Heart right ventricle (tissue), 16 donors: ENCODE measurements at regions of chr10 and their contacts with region 1.

Region 1: GRCh38 chr10:132307823-132308587 is at the start of gene STK32C:
- DNase-seq: peak; percentile 90 to 94
- ATAC-seq: peak; percentile 95 to 98 (median 98)
- H3K4me3 ChIP-seq: peak within 1 kb of the TSS; percentile 61 to 98 (median 88)
- H3K27ac ChIP-seq: peak within 1 kb of the TSS in 9 of 10 donors; percentile 60 to 80 (median 75)
- H3K4me1 ChIP-seq: peaks cover 4 to 19% (median 17%) of the 10 kb centered on the region in 9 donors
- H3K27me3 ChIP-seq: peaks cover 0 to 18% (median 0%) of the 10 kb centered on the region in 7 donors
- CTCF ChIP-seq: peak in 1 of 9 donors; percentile 19
- total RNA-seq, gene STK32C: 2.7 to 7.7 (median 5.7) TPM

Region 2: DNA sequence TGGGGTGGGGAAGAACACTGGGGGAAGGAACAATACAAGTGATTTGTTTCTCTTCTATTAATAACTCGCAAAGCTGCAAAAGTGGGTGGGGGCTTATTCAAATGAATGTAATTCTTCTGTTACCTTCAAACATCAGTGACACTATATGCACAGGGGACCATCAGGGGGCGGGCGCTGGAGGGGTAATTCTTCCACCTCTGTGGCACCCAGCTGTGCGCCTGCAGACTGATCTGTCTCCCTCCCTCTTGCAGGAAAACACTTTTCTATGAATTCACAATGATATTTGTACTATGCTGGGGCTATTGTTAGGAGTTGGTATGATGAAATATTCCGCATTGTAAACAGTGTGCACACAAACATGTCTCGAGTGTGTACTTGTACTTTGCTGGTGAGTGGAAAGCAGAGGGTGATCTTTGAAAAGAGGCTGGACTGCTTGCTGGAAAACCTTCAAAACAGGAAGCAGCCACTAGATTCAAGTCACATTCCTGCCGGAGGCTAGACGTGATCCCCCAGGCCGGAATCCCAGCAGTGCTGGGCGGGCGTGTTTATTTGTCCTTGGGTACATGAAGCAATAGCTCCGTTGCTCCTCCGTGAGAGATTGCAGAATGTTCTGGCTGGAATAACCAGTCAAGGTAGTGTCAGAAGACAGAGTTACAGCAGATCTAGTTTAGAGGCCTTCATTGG is 310.5 kb before region 1 on chr10:
- intact Hi-C with region 1: no loop called
- DNase-seq: peak; percentile 37 to 59
- ATAC-seq: peak in 7 of 8 donors; percentile 48 to 79 (median 65)
- H3K4me3 ChIP-seq: peak overlapping the region in 1 of 10 donors; percentile 1
- H3K27ac ChIP-seq: peak overlapping the region; percentile 42 to 82 (median 71)
- H3K4me1 ChIP-seq: peaks cover 14 to 45% (median 28%) of the 10 kb centered on the region in 9 donors
- H3K27me3 ChIP-seq: no peaks in the 10 kb centered on the region
- CTCF ChIP-seq: no peak

Region 3: GRCh38 chr10:132324186-132324585 is 16.2 kb after region 1 on chr10:
- intact Hi-C with region 1: loop called in 1 of 10 experiments (anchors 2 kb)
- DNase-seq: no peak
- ATAC-seq: no peak
- H3K4me3 ChIP-seq: no peak overlapping the region
- H3K27ac ChIP-seq: no peak overlapping the region
- H3K4me1 ChIP-seq: peaks cover 0 to 45% (median 8%) of the 10 kb centered on the region in 9 donors
- H3K27me3 ChIP-seq: no peaks in the 10 kb centered on the region
- CTCF ChIP-seq: no peak

Region 4: GRCh38 chr10:132331526-132332432 is 23.8 kb after region 1 on chr10 and contains the start of gene LRRC27:
- intact Hi-C with region 1: loop called in 3 of 10 experiments (anchors 2 kb)
- DNase-seq: peak; percentile 99 to 100
- ATAC-seq: peak; percentile 93 to 97 (median 94)
- H3K4me3 ChIP-seq: peak within 1 kb of the TSS; percentile 68 to 97 (median 85)
- H3K27ac ChIP-seq: peak within 1 kb of the TSS; percentile 4 to 90 (median 86)
- H3K4me1 ChIP-seq: peaks cover 5 to 59% (median 49%) of the 10 kb centered on the region in 9 donors
- H3K27me3 ChIP-seq: no peaks in the 10 kb centered on the region
- CTCF ChIP-seq: no peak
- total RNA-seq, gene LRRC27: 3.0 to 8.1 (median 4.7) TPM